ENCODE measurements at regions of chr3 and their contacts with region 1.

Region 1: DNA sequence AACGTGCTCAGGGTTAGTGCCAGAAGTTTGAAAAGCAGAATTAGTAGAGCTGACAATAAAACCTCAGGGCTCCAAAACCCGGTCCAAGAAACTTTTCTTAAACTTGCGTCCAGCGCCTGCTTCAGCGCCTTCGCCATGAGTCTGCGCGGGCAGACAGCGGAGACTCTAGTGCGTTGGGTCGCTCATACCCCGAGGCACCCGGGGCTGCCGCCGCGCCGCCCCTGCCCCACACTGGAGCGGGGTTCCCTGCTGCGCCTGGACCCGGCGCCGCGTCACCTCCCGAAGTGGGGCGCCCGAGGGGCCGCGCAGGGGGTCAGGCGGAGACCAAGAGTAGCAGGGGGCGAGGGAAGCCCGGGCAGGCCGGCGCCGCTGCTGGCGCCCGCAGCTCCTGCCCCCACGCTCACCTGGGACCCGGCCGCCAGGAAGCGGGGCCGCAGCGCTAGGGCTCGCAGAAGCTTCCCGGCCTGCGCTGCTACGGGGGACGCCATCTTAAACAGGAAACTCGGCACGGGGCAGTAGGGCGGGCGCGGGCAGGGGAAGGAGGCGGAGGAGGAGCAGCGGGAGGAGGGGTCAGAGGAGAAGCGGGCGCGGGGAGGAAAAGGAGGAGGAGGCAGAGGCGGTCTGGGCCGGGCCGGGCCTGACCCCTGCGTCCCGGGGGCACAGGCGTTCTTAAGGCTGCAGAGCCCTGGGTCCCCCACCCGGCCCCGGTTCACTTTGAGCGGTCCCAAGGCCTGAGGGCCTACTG is at the start of gene SUCLG2:
- DNase-seq: peak; percentile 92
- H3K4me3 Mint-ChIP-seq: peak within 1 kb of the TSS; percentile 76
- H3K27ac Mint-ChIP-seq: peak within 1 kb of the TSS; percentile 87
- H3K4me1 Mint-ChIP-seq: peaks cover 56% of the 10 kb centered on the region
- H3K27me3 Mint-ChIP-seq: no peaks in the 10 kb centered on the region
- total RNA-seq, gene SUCLG2: 81.3 to 85.3 TPM

Region 2: GRCh38 chr3:66500576-66501482 is 1153.4 kb before region 1 on chr3 and contains the start of gene LRIG1:
- CTCF ChIA-PET with region 1: no interaction called
- intact Hi-C with region 1: loop called (anchors 10 kb)
- DNase-seq: peak; percentile 98
- H3K4me3 Mint-ChIP-seq: peak within 1 kb of the TSS; percentile 90
- H3K27ac Mint-ChIP-seq: peak within 1 kb of the TSS; percentile 84
- H3K4me1 Mint-ChIP-seq: peaks cover 50% of the 10 kb centered on the region
- H3K27me3 Mint-ChIP-seq: peaks cover 3% of the 10 kb centered on the region
- total RNA-seq, gene LRIG1: 18.3 to 19.0 TPM

Region 3: GRCh38 chr3:67113802-67114407 is 540.4 kb before region 1 on chr3:
- CTCF ChIA-PET with region 1: interaction called, 5 read pairs
- intact Hi-C with region 1: loop called (anchors 1 kb)
- DNase-seq: peak; percentile 94
- H3K4me3 Mint-ChIP-seq: no peak overlapping the region
- H3K27ac Mint-ChIP-seq: no peak overlapping the region
- H3K4me1 Mint-ChIP-seq: peaks cover 4% of the 10 kb centered on the region
- H3K27me3 Mint-ChIP-seq: peaks cover 24% of the 10 kb centered on the region

Region 4: GRCh38 chr3:67605377-67605776 is 48.9 kb before region 1 on chr3:
- CTCF ChIA-PET with region 1: no interaction called
- intact Hi-C with region 1: loop called (anchors 2 kb)
- DNase-seq: peak; percentile 31
- H3K4me3 Mint-ChIP-seq: no peak overlapping the region
- H3K27ac Mint-ChIP-seq: peak overlapping the region; percentile 37
- H3K4me1 Mint-ChIP-seq: peaks cover 64% of the 10 kb centered on the region
- H3K27me3 Mint-ChIP-seq: no peaks in the 10 kb centered on the region

Region 5: GRCh38 chr3:67790043-67790442 is 135.8 kb after region 1 on chr3:
- CTCF ChIA-PET with region 1: interaction called, 6 read pairs
- intact Hi-C with region 1: loop called (anchors 5 kb)
- DNase-seq: peak; percentile 81
- H3K4me3 Mint-ChIP-seq: no peak overlapping the region
- H3K27ac Mint-ChIP-seq: no peak overlapping the region
- H3K4me1 Mint-ChIP-seq: peaks cover 14% of the 10 kb centered on the region
- H3K27me3 Mint-ChIP-seq: no peaks in the 10 kb centered on the region

Region 6: GRCh38 chr3:68274286-68274685 is 620.0 kb after region 1 on chr3:
- CTCF ChIA-PET with region 1: no interaction called
- intact Hi-C with region 1: no loop called
- DNase-seq: no peak
- H3K4me3 Mint-ChIP-seq: no peak overlapping the region
- H3K27ac Mint-ChIP-seq: no peak overlapping the region
- H3K4me1 Mint-ChIP-seq: no peaks in the 10 kb centered on the region
- H3K27me3 Mint-ChIP-seq: no peaks in the 10 kb centered on the region

Region 7: DNA sequence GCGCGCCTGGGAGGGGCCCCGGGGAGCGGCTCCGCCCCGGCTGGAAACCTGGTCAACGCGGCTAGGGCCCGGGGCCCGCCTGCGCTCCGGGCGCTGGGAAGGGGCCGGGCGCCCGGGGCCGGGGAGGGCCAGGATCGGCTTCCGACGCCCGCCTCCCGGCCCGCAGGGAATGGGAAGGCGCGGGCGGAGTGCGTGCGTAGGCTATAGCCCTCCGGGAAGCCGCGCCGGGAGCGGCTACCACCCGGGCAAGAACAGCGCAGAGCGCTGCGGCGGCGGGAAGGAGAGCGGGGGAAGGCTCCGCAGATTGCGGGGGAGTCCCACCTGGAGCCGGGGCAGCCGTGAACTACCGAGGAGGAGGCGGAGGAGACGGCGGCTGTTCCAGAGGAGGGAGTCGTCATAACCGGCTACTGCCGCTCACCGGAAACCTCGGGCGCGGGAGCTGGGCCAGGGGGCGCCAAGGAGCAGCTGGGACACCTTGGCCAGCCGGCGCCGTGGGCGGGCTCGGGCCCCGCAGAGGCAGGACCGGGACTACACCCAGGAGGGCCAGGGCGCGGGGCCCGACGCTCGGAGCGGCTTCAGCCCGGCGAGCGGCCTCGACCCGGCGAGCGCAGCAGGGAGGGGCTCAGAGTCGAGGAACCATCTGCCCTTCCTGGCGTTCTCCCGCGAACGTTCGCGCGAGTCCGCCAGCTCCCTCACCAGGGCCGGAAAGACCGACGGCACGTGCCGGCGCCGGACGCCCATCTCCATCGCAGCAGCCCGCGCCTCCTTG is 1359.2 kb after region 1 on chr3 and contains the start of gene EOGT:
- CTCF ChIA-PET with region 1: no interaction called
- intact Hi-C with region 1: loop called (anchors 10 kb)
- DNase-seq: peak; percentile 88
- H3K4me3 Mint-ChIP-seq: peak within 1 kb of the TSS; percentile 78
- H3K27ac Mint-ChIP-seq: peak within 1 kb of the TSS; percentile 73
- H3K4me1 Mint-ChIP-seq: peaks cover 15% of the 10 kb centered on the region
- H3K27me3 Mint-ChIP-seq: no peaks in the 10 kb centered on the region
- total RNA-seq, gene EOGT: 4.8 TPM